Tibial artery (tissue), 4 donors: ENCODE measurements at regions of chr1 and their contacts with region 1.

Region 1: GRCh38 chr1:73617145-73617544 is 580.8 kb downstream of the LRRIQ3 start:
- DNase-seq: no peak
- H3K4me3 ChIP-seq: no peak overlapping the region
- H3K27ac ChIP-seq: no peak overlapping the region
- H3K4me1 ChIP-seq: no peaks in the 10 kb centered on the region
- H3K27me3 ChIP-seq: no peaks in the 10 kb centered on the region
- CTCF ChIP-seq: no peak

Region 2: GRCh38 chr1:73401666-73402065 is 215.5 kb before region 1 on chr1:
- intact Hi-C with region 1: no loop called
- DNase-seq: no peak
- H3K4me3 ChIP-seq: no peak overlapping the region
- H3K27ac ChIP-seq: no peak overlapping the region
- H3K4me1 ChIP-seq: no peaks in the 10 kb centered on the region
- H3K27me3 ChIP-seq: no peaks in the 10 kb centered on the region
- CTCF ChIP-seq: no peak

Region 3: DNA sequence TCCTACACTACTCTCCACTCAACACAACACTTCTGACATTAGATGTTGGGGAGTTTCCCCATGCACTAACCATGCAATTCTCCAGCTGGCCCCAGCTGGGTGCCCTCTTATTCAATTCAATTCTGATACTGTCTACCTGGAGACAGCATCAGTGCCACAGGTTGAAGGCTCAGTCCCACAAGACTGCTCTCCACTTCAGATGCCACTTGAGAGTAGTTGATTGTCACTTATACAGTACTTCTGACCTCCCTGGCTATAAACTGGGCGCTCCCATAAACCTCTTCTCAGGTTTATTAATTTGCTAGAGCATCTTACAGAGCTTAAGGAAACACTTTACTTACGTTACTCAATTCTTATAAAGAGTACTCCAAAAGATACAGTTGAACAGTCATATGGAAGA is 138.5 kb after region 1 on chr1:
- intact Hi-C with region 1: no loop called
- DNase-seq: no peak
- H3K4me3 ChIP-seq: no peak overlapping the region
- H3K27ac ChIP-seq: no peak overlapping the region
- H3K4me1 ChIP-seq: no peaks in the 10 kb centered on the region
- H3K27me3 ChIP-seq: no peaks in the 10 kb centered on the region
- CTCF ChIP-seq: no peak

Region 4: DNA sequence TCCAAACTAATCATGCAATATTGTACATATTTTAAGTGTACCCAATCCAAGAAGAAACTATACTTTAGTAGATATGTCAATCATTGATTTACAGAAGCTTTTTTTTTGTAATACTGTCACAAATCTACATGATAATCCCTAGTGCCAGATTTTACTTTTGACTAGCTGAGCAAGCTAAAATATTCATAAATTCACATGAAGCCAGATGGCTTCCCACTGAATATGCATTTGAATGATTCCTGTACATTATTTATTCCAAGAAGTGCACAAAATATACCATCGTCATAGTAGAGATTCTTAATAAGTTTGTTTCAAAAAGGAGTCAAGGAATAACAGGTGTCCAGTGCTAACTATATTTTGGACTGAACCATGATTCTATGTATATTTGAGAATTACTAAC is 598.1 kb after region 1 on chr1:
- intact Hi-C with region 1: no loop called
- DNase-seq: no peak
- H3K4me3 ChIP-seq: no peak overlapping the region
- H3K27ac ChIP-seq: no peak overlapping the region
- H3K4me1 ChIP-seq: no peaks in the 10 kb centered on the region
- H3K27me3 ChIP-seq: no peaks in the 10 kb centered on the region
- CTCF ChIP-seq: no peak

Region 5: DNA sequence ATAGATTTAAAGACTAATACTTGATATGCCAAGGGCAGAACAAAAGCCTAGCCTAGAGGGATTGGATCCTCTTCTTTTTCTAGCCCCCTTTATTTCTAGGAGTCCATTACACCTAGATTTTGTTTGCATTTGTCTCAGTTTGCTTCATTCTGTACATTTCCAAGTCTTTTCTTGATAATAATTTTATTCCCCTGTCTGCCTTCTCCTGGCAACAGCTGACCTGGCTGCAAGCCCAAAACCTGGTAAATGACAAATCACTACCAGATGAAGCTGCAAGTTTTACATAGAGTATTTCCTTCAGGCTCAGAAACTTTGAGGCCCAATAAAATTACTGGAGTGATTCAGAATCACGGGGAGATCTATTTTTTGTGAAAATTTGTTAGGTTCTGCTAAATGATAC is 1480.5 kb after region 1 on chr1:
- intact Hi-C with region 1: loop called (anchors 5 kb)
- DNase-seq: no peak
- H3K4me3 ChIP-seq: no peak overlapping the region
- H3K27ac ChIP-seq: no peak overlapping the region
- H3K4me1 ChIP-seq: no peaks in the 10 kb centered on the region
- H3K27me3 ChIP-seq: no peaks in the 10 kb centered on the region
- CTCF ChIP-seq: no peak